HAP-1 (cell line): ENCODE measurements at regions of chr1 and their contacts with region 1.

Region 1: GRCh38 chr1:44500181-44501046 is 95.4 kb downstream of the RNF220 start:
- DNase-seq: peak; percentile 87 to 91
- H3K4me3 ChIP-seq: peak overlapping the region; percentile 15
- H3K4me1 ChIP-seq: peaks cover 31% of the 10 kb centered on the region
- H3K27me3 ChIP-seq: no peaks in the 10 kb centered on the region

Region 2: DNA sequence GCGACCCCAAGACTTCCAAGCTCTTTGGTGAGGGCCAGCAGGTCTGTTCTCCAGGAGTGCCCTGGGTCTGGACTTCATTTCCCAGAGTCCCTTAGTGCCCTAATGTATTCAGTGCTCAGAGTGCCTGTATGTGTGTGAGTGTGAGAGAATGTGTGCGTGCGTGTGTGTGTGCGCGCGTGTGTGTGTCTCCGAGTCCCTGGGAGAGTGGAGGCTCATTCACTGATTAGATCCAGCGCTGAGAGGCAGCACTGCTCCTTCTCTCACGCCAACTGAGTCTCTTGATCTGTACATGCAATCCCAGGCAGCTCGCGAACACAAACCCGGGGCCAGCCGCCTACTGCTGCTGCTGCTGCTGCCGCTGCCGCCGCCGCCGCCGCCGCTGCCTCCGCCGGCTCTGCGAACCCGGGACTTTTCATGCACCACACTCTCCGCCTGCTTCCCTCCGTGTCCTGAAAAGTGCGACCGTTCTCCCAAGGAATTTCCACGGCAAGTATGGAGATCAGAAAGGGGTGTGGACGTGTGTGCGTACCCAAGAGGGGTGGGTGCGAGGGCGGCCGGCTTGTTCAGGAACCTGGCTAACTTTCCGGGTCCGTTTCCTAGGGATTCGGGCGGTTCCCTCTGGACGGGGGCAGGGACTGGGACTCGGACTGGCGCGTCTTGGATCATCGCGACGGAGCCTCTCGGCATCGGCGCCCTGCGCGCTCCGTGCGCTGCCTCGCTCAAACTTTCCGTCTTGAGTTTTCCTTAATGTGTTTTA is 95.2 kb before region 1 on chr1 and contains the start of gene RNF220:
- in situ Hi-C with region 1: loop called (anchors 5 kb)
- DNase-seq: peak; percentile 81 to 86
- H3K4me3 ChIP-seq: peak within 1 kb of the TSS; percentile 65
- H3K4me1 ChIP-seq: peaks cover 19% of the 10 kb centered on the region
- H3K27me3 ChIP-seq: no peaks in the 10 kb centered on the region